ENCODE measurements at regions of chr18 and their contacts with region 1.

Region 1: DNA sequence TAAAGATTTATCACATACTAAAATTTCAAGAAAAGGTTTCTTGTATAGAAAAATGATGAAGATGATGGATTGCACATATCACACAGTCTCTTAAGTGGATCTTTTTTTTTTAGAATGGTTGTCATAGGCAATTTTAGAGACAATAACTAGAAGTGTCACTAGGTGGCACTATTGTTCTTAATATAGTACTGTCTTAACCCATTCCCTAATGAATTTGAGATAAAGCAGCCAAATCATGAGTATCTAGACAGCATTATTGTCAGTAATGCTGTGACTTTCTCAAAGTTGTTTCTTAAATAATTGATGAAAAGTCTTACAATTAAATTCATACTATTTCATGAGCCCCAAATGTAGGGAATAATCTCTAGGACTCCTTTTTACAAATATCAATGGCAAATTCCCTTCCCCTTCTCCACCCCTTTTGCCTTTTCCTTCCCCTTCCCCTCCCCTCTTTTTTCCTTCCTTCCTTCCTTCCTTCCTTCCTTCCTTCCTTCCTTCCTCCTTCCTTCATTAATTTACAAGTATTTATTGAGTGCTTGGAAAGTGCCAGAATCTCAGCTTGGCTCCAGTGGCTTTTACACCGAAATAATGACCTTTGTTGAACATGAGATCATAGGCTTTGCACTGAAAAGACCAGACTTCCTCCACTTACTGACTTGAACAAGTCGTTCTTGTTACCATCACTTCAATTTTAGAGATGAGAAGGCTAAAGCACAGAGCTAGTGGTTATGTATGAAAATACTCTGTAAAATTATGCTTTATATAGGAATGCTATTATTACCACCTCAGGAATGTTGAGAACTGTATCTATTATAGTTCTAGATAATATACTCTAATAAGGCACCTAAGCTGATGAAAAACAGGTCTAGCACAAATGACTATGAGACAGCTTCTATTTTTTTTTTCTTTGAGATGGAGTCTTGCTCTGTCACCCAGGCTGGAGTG is 19.8 kb downstream of the MYL12B start:
- DNase-seq: peak in 1 of 2 donors; percentile 33
- ATAC-seq: peak; percentile 78 to 89 (median 86)
- H3K4me3 ChIP-seq: no peak overlapping the region
- H3K27ac ChIP-seq: peak overlapping the region in 6 of 10 donors; percentile 1 to 56 (median 32)
- H3K4me1 ChIP-seq: peaks cover 0 to 27% (median 14%) of the 10 kb centered on the region in 9 donors
- H3K27me3 ChIP-seq: no peaks in the 10 kb centered on the region
- CTCF ChIP-seq: peak; percentile 39 to 87 (median 73)

Region 2: GRCh38 chr18:3454365-3455089 is 172.8 kb after region 1 on chr18:
- intact Hi-C with region 1: loop called in 9 of 10 experiments (anchors 2 to 10 kb)
- DNase-seq: peak in 1 of 2 donors; percentile 56
- ATAC-seq: no peak
- H3K4me3 ChIP-seq: peak overlapping the region in 9 of 10 donors; percentile 4 to 93 (median 69)
- H3K27ac ChIP-seq: peak overlapping the region in 9 of 10 donors; percentile 87 to 100 (median 97)
- H3K4me1 ChIP-seq: peaks cover 3 to 59% (median 28%) of the 10 kb centered on the region in 9 donors
- H3K27me3 ChIP-seq: no peaks in the 10 kb centered on the region
- CTCF ChIP-seq: peak; percentile 55 to 86 (median 69)

Region 3: DNA sequence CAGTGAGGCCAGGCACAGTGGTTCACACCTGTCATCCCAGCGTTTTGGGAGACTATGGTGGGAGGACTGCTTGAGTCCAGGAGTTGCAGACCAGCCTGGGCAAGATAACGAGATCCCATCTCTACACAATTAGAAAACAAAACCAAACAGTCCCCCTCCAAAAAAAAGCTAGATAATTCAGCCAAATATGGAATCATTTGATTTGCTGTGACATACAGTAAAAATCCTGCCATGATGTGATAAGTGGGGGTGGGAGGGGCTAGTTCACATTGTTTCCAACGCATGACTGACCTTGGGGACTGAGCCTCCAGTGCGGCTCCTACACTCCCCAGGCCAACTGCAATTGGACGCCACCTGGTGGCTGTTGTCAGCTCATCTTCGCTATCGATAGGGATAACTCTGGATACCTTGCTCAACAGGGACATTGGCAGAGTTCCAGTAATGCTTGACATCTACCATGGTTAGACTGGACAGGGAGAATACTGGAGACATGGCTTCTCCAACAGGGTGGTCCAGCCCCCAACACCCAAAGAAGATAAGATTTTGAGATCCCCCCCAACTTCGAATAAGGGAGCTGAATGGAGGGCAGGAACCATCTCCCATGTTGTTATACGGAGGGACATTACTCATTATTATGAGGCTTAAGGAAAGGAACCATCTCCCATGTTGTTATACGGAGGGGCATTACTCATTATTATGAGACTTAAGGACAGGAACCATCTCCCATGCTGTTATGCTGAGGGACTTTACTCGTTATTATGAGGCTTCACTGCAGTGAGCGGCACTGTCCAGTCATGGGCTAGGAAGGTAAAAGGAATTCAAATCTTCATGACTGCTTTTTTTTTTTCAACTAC is 304.2 kb after region 1 on chr18:
- intact Hi-C with region 1: loop called in 9 of 10 experiments (anchors 2 to 10 kb)
- DNase-seq: peak; percentile 67 to 73
- ATAC-seq: peak; percentile 75 to 93 (median 86)
- H3K4me3 ChIP-seq: no peak overlapping the region
- H3K27ac ChIP-seq: peak overlapping the region in 1 of 10 donors; percentile 3
- H3K4me1 ChIP-seq: peaks cover 0 to 11% (median 0%) of the 10 kb centered on the region in 9 donors
- H3K27me3 ChIP-seq: no peaks in the 10 kb centered on the region
- CTCF ChIP-seq: peak; percentile 37 to 82 (median 74)

Region 4: GRCh38 chr18:3665780-3666525 is 384.2 kb after region 1 on chr18:
- intact Hi-C with region 1: loop called (anchors 1 to 2 kb)
- DNase-seq: peak; percentile 77 to 86
- ATAC-seq: peak; percentile 88 to 97 (median 94)
- H3K4me3 ChIP-seq: peak overlapping the region in 8 of 10 donors; percentile 10 to 41 (median 38)
- H3K27ac ChIP-seq: peak overlapping the region in 9 of 10 donors; percentile 41 to 83 (median 69)
- H3K4me1 ChIP-seq: peaks cover 0 to 34% (median 8%) of the 10 kb centered on the region in 9 donors
- H3K27me3 ChIP-seq: no peaks in the 10 kb centered on the region
- CTCF ChIP-seq: peak; percentile 86 to 95 (median 94)

Region 5: GRCh38 chr18:3869848-3870247 is 588.1 kb after region 1 on chr18:
- intact Hi-C with region 1: loop called in 2 of 10 experiments (anchors 10 kb)
- DNase-seq: no peak
- ATAC-seq: peak in 5 of 8 donors; percentile 33 to 79 (median 61)
- H3K4me3 ChIP-seq: no peak overlapping the region
- H3K27ac ChIP-seq: no peak overlapping the region
- H3K4me1 ChIP-seq: peaks cover 0 to 26% (median 4%) of the 10 kb centered on the region in 9 donors
- H3K27me3 ChIP-seq: no peaks in the 10 kb centered on the region
- CTCF ChIP-seq: peak; percentile 11 to 64 (median 49)

Region 6: DNA sequence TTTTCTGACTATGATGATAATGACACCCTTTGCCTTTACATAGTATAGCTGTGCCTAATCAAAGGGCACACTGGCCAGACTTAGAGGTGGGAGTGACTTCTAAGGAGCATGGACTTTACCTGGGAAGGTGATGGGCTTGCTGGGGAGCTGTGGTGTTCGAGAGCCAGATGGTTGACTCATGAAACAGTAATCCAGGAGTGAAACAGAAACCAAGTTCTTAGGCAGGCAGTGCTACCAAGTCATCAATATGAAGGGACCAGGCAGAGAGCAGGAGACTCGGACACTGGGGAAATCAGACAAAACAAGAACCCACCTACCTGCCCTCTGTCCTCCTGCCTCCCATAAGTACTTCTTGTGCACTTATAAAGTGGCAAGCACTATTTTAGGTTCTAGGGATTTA is 743.0 kb after region 1 on chr18:
- intact Hi-C with region 1: no loop called
- DNase-seq: no peak
- ATAC-seq: no peak
- H3K4me3 ChIP-seq: no peak overlapping the region
- H3K27ac ChIP-seq: no peak overlapping the region
- H3K4me1 ChIP-seq: no peaks in the 10 kb centered on the region
- H3K27me3 ChIP-seq: peaks cover 0 to 3% (median 0%) of the 10 kb centered on the region in 7 donors
- CTCF ChIP-seq: no peak